Heart left ventricle (tissue), 16 donors: ENCODE measurements at regions of chr3 and their contacts with region 1.

Region 1: DNA sequence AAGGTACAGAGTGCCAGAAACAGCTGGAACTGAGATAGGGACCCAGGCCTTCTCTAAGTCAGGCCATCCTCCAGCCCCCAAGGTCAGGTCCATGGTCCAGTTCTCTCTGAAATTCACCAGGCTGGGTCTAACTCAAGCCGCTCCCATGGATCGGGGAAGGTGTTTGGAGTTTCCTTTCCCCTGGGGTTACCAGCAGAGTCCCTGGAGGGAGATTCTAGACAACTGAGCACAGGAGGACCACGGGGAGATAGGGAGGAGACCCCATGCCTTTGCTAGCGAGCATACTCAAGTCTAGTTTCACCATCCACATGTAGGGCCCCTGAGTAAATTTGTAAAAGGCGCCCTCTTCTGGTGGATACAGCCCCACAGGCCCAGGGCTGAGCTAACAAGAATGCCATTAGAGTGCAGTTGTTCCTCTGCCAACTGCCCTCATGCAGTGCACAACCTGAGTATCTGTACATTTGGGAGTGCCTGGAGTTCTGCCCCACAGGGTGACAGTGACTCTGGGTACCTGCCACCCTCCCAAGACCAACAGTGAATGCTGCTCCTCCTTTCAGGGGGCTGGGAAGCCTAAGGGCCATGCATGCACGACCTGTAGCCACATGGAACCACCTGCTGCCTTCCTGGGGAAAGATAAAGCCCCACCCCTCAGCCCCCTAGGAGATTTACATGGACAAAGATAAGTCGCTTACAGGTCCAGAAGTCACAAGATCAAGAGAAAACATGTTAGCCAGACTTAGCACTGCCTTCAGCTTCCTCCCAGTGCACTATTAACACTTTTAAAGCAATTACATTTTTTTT is 89.0 kb downstream of the IQSEC1 start:
- DNase-seq: peak in 4 of 5 donors; percentile 71 to 80 (median 74)
- ATAC-seq: peak; percentile 78 to 90 (median 82)
- H3K4me3 ChIP-seq: no peak overlapping the region
- H3K27ac ChIP-seq: peak overlapping the region in 4 of 12 donors; percentile 2 to 41 (median 23)
- H3K4me1 ChIP-seq: peaks cover 0 to 64% (median 28%) of the 10 kb centered on the region in 12 donors
- H3K27me3 ChIP-seq: no peaks in the 10 kb centered on the region
- CTCF ChIP-seq: peak; percentile 68 to 92 (median 80)
- POLR2A ChIP-seq: no peak

Region 2: DNA sequence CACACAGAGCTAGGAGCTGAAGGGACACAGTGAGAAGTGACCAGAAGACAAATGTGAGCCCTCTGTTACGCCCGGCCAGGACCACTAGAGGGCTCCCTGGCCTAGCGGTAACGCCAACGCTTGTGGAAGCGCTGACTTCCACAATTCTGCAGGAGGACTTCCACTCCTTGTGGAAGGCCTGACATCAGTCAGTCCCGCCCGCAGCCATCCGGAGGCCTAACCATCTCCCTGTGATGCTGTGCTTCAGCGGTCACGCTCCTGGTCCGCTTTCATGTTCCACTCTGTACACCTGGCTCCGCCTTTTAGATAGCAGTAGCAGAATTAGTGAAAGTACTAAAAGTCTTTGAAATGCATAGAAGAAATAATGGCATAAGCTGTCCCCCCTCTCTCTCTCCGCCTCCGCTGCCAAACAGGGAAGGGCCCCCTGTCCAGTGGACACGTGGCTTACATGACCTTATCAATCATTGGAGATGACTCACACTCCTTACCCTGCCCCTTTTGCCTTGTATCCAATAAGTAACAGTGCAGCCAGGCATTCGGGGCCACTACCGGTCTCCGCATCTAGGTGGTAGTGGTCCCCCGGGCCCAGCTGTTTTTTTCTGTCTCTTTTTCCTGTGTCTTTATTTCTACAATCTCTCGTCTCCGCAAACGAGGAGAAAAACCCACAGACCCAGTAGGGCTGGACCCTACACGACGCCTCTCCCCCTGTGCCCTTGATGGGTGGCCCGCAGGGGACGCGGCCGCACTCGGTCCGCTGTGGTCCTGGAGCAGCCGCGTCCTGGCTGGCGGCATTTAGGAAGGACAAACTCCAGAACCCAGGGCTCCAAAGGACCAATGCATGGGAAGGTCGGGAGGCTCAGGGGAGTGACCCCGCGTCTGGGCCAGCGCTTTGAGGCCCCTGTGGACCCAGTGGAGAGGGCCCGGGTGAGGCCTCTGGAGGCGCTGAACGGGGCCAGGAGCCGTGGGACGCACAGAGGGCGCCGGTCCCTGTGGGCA is 115.9 kb before region 1 on chr3:
- intact Hi-C with region 1: loop called (anchors 1 to 10 kb)
- DNase-seq: peak; percentile 85 to 90 (median 86)
- ATAC-seq: peak; percentile 83 to 96 (median 94)
- H3K4me3 ChIP-seq: peak overlapping the region in 9 of 12 donors; percentile 1 to 47 (median 26)
- H3K27ac ChIP-seq: peak overlapping the region in 1 of 12 donors; percentile 25
- H3K4me1 ChIP-seq: peaks cover 0 to 13% (median 8%) of the 10 kb centered on the region in 12 donors
- H3K27me3 ChIP-seq: peaks cover 0 to 13% (median 0%) of the 10 kb centered on the region in 9 donors
- CTCF ChIP-seq: peak; percentile 80 to 98 (median 92)
- POLR2A ChIP-seq: no peak

Region 3: GRCh38 chr3:12901623-12902045 is 82.6 kb before region 1 on chr3:
- intact Hi-C with region 1: loop called in 3 of 10 experiments (anchors 5 to 10 kb)
- DNase-seq: peak in 3 of 5 donors; percentile 16 to 22 (median 21)
- ATAC-seq: no peak
- H3K4me3 ChIP-seq: no peak overlapping the region
- H3K27ac ChIP-seq: no peak overlapping the region
- H3K4me1 ChIP-seq: peaks cover 0 to 44% (median 22%) of the 10 kb centered on the region in 12 donors
- H3K27me3 ChIP-seq: no peaks in the 10 kb centered on the region
- CTCF ChIP-seq: peak in 1 of 12 donors; percentile 22
- POLR2A ChIP-seq: no peak

Region 4: GRCh38 chr3:12934431-12934830 is 49.8 kb before region 1 on chr3:
- intact Hi-C with region 1: loop called in 1 of 10 experiments (anchors 5 kb)
- DNase-seq: peak; percentile 78 to 92 (median 83)
- ATAC-seq: peak in 3 of 4 donors; percentile 49 to 69 (median 67)
- H3K4me3 ChIP-seq: peak overlapping the region in 1 of 12 donors; percentile 12
- H3K27ac ChIP-seq: peak overlapping the region; percentile 21 to 89 (median 78)
- H3K4me1 ChIP-seq: peaks cover 43 to 99% (median 87%) of the 10 kb centered on the region in 12 donors
- H3K27me3 ChIP-seq: no peaks in the 10 kb centered on the region
- CTCF ChIP-seq: no peak
- POLR2A ChIP-seq: peak in 1 of 2 donors; percentile 28

Region 5: DNA sequence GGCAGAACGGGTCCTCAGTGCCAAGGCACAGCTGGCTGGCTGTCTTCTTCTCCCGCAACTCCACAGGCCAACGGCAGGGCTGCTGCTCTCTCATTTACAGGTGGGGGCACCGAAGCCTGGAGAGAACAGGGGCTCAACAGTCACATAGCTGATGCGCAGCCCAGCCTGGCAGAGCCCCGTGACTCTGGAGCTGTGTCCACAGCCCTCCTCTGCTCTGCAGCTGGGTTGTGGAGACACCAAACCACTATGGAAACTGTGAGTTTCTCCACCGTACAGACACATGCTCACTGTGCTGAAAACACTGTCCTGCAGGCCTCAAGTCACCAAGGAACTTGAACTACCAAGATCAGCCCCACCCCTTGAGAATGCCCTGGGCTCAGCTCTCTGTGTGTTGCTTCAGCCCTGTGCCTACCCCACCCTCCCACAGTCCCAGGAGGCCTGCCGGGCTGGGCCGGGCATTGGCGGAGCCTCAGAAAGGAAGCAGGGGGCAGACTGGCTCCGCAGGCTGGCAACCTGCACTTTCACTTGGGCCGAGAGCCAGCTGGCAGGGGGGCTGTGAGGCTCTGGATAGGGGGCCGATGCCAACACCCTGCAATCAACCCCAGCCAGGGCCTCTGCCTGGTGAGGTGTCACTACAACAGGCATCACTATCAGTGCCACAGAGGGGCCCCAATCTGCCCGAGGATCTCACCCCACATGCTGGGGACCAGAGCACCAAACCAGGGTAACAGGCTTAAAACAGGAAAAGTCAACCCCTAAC is 29.2 kb before region 1 on chr3:
- intact Hi-C with region 1: loop called in 1 of 10 experiments (anchors 2 kb)
- DNase-seq: peak; percentile 82 to 92 (median 91)
- ATAC-seq: peak; percentile 86 to 90 (median 86)
- H3K4me3 ChIP-seq: no peak overlapping the region
- H3K27ac ChIP-seq: peak overlapping the region; percentile 38 to 84 (median 76)
- H3K4me1 ChIP-seq: peaks cover 33 to 97% (median 87%) of the 10 kb centered on the region in 12 donors
- H3K27me3 ChIP-seq: no peaks in the 10 kb centered on the region
- CTCF ChIP-seq: peak in 9 of 12 donors; percentile 5 to 56 (median 30)
- POLR2A ChIP-seq: no peak

Region 6: GRCh38 chr3:13012228-13012691 is 28.0 kb after region 1 on chr3:
- intact Hi-C with region 1: no loop called
- DNase-seq: peak; percentile 70 to 88 (median 81)
- ATAC-seq: peak; percentile 22 to 72 (median 52)
- H3K4me3 ChIP-seq: peak overlapping the region in 1 of 12 donors; percentile 66
- H3K27ac ChIP-seq: peak overlapping the region in 6 of 12 donors; percentile 28 to 99 (median 66)
- H3K4me1 ChIP-seq: peaks cover 0 to 89% (median 33%) of the 10 kb centered on the region in 12 donors
- H3K27me3 ChIP-seq: no peaks in the 10 kb centered on the region
- CTCF ChIP-seq: no peak
- POLR2A ChIP-seq: no peak

Region 7: GRCh38 chr3:13204177-13204581 is 220.0 kb after region 1 on chr3:
- intact Hi-C with region 1: no loop called
- DNase-seq: peak in 1 of 5 donors; percentile 51
- ATAC-seq: peak in 1 of 4 donors; percentile 22
- H3K4me3 ChIP-seq: peak overlapping the region in 1 of 12 donors; percentile 8
- H3K27ac ChIP-seq: no peak overlapping the region
- H3K4me1 ChIP-seq: peaks cover 0 to 5% (median 0%) of the 10 kb centered on the region in 12 donors
- H3K27me3 ChIP-seq: peaks cover 0 to 39% (median 10%) of the 10 kb centered on the region in 9 donors
- CTCF ChIP-seq: no peak
- POLR2A ChIP-seq: no peak